Posterior vena cava (tissue), 2 donors: ENCODE measurements at regions of chr3 and their contacts with region 1.

Region 1: DNA sequence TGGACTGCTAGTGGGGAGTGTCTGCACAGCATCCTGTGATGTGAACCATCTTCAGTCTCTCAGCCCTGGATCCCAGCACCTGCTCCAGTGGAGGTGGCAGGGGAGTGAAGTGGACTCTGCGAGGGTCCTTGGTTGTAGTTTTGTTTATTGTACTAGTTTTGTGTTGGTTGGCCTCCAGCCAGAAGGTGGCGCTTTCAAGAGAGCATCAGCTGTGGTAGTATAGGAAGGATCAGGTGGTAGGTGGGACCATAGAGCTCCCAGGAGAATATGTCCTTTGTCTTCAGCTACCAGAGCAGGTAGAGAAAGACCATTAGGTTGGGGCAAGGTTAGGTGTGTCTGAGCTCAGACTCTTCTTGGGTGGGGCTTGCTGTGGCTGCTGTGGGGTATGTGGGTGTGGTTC is 20.9 kb downstream of the NEK11 start:
- DNase-seq: no peak

Region 2: GRCh38 chr3:131526801-131527347 is 479.3 kb after region 1 on chr3:
- intact Hi-C with region 1: no loop called
- DNase-seq: peak; percentile 85

Region 3: DNA sequence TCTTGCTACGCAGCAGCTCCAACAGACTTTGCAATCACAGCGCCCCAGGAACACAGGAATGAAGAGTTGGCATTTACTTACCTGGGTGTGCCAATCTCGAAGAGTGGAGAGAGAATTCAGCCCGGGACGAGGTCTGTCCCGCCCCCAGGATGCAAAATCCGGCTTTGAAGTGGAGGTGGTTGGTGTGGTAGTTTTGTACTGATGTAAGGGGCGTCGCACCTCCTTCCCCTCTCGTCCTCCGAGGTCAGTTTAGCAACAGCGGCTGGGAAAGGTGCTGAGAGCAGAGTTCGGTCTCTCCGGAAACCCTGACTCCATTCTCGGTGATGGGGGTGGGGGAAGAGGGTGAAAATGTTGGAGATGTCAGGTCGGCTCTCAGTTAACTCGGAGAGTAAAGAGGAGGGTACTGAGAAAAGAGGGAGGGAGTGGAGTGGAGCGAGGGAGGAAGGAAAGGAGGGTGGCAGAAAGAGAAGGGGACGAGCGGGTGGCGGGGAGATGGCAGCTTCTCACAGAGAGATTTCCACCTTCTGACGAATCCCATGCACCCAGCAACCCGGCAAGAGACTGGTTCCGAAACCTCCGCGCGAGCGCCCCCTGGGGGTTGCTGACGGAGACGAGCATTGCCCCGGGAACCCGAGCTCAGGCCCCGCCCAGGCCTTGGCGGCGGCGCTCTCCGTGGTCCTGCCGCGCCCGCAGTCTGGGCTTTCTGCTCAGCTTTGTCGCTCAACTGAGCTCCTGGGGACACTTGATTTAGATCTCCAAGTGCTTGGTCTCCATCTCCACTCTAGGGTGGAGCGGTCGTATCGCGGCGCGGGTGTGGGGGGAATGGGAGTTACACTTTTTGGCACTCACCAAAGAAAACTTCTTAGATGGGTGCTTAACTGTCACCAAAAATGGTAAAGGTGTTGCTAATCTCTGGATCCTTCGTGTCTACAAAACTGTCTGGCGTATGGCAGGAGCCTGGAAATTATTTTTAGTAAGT is 987.2 kb after region 1 on chr3 and contains the start of gene CPNE4:
- intact Hi-C with region 1: loop called in 1 of 2 experiments (anchors 5 kb)
- DNase-seq: peak; percentile 93
- total RNA-seq, gene CPNE4: not detected